ENCODE measurements at regions of chr5 and their contacts with region 1.

Region 1: GRCh38 chr5:172770675-172771438 is at the start of gene DUSP1:
- DNase-seq: peak; percentile 97
- H3K4me3 Mint-ChIP-seq: peak within 1 kb of the TSS; percentile 89
- H3K27ac Mint-ChIP-seq: peak within 1 kb of the TSS; percentile 92
- H3K4me1 Mint-ChIP-seq: peaks cover 65% of the 10 kb centered on the region
- H3K27me3 Mint-ChIP-seq: no peaks in the 10 kb centered on the region
- total RNA-seq, gene DUSP1: 10.6 to 10.7 TPM

Region 2: DNA sequence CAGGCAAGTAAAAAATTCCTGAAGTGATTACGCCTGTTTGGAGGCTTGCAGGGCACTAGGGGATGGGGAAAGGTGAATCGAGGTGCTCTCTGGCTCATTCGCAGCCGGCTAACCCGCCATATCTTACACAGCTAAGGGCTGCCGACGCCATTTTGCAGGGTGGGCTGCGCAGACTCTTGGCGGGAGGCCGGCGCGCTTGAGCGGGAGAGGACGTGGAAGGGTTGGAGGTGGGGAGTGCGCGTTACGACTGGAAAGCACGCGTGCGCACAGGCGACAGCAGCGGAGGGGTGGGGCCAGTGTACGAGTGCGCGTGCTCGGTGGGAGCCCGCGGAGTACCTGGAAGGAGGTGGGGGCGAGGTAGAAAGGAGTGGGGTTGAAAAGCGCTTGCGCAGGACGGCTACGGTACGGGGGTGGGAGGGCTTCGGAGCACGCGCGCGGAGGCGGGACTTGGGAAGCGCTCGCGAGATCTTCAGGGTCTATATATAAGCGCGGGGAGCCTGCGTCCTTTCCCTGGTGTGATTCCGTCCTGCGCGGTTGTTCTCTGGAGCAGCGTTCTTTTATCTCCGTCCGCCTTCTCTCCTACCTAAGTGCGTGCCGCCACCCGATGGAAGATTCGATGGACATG is 1383.4 kb before region 1 on chr5 and contains the start of gene NPM1:
- CTCF ChIA-PET with region 1: no interaction called
- POLR2A ChIA-PET with region 1: no interaction called
- intact Hi-C with region 1: loop called (anchors 5 kb)
- DNase-seq: peak; percentile 98
- H3K4me3 Mint-ChIP-seq: peak within 1 kb of the TSS; percentile 93
- H3K27ac Mint-ChIP-seq: peak within 1 kb of the TSS; percentile 96
- H3K4me1 Mint-ChIP-seq: peaks cover 39% of the 10 kb centered on the region
- H3K27me3 Mint-ChIP-seq: peaks cover 3% of the 10 kb centered on the region
- total RNA-seq, gene NPM1: 2,483 to 2,592 TPM

Region 3: GRCh38 chr5:171897231-171897630 is 873.6 kb before region 1 on chr5:
- CTCF ChIA-PET with region 1: no interaction called
- POLR2A ChIA-PET with region 1: no interaction called
- intact Hi-C with region 1: no loop called
- DNase-seq: peak; percentile 21
- H3K4me3 Mint-ChIP-seq: no peak overlapping the region
- H3K27ac Mint-ChIP-seq: no peak overlapping the region
- H3K4me1 Mint-ChIP-seq: peaks cover 20% of the 10 kb centered on the region
- H3K27me3 Mint-ChIP-seq: no peaks in the 10 kb centered on the region

Region 4: DNA sequence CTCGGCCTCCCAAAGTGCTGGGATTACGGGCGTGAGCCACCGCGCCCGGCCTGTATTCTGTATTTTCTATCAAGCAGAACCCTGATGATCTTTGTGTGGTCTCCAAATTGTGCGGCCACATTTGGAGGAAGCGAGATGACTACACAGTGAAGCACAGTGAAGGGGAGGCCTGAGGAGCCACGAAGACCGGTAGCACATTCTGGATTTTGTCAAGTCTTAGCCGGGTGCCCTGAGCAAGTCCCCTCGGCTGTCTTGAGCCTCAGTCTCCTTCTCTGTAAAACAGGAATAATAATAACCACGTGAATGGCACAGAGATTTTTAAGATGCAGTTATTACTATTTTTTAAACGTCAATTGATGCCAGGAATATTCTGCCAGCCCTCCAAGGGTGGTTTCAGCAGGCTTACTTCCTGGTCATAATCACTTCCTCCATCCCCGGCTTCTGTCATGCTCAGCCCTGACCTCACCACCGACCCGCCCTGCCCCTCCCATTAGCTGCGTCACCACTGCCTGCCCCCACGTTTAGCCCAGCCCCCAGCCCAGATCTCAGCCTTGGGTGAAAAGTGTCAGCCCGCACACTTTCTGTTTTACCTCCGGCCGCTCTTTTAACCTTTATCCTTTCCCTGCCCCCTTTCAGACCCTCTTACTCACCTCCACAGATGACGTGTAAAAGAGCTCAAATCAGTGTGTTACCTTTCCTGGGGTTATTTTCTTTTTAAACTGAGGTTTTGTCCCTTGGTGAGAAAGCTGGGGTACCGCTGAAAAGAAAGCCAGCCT is 36.2 kb after region 1 on chr5:
- CTCF ChIA-PET with region 1: interaction called, 12 read pairs
- POLR2A ChIA-PET with region 1: interaction called, 14 read pairs
- intact Hi-C with region 1: loop called (anchors 1 kb)
- DNase-seq: peak; percentile 98
- H3K4me3 Mint-ChIP-seq: peak overlapping the region; percentile 29
- H3K27ac Mint-ChIP-seq: peak overlapping the region; percentile 84
- H3K4me1 Mint-ChIP-seq: peaks cover 17% of the 10 kb centered on the region
- H3K27me3 Mint-ChIP-seq: no peaks in the 10 kb centered on the region

Region 5: DNA sequence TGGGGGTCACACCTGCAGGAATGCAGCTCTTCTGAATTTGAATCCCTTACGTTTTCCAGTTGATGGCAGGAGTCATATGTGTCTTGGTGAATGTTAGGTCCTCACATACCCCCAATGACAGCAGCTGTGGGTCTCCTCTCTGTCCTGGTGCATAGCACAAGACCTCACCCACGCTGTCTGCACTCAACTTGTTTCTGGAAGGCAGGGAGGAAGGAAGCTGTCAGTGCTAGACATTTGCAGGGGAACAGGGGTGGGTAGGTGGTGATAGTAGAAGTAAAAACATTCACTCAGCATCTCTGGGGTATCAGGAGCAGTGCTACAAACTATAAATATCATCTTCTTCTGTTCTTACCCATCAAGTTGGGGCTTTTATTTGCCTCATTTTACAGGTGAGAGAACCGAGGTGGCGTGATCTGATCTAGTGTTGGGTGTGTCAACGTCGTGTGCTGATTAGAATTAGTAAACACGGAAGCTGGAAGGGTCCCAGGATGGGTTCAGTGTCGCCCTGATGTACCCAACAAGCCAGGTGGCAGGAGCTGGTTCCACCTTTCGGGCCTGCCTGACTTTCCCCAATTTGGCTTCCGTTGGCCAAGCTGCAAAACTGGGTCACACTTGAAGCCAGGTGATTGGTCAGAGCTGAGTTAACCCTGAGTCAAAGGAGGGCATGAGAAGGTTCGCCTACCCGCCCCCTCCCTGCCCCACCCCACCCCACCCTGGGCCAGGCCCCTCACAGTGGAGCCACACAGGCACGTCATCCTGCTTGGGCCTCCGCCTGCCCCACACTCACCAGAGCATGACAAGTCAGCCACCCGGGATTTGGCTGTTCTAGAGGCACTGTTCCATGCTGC is 79.0 kb after region 1 on chr5:
- CTCF ChIA-PET with region 1: interaction called, 4 read pairs
- POLR2A ChIA-PET with region 1: interaction called, 4 read pairs
- intact Hi-C with region 1: loop called (anchors 5 kb)
- DNase-seq: no peak
- H3K4me3 Mint-ChIP-seq: no peak overlapping the region
- H3K27ac Mint-ChIP-seq: no peak overlapping the region
- H3K4me1 Mint-ChIP-seq: peaks cover 25% of the 10 kb centered on the region
- H3K27me3 Mint-ChIP-seq: no peaks in the 10 kb centered on the region

Region 6: DNA sequence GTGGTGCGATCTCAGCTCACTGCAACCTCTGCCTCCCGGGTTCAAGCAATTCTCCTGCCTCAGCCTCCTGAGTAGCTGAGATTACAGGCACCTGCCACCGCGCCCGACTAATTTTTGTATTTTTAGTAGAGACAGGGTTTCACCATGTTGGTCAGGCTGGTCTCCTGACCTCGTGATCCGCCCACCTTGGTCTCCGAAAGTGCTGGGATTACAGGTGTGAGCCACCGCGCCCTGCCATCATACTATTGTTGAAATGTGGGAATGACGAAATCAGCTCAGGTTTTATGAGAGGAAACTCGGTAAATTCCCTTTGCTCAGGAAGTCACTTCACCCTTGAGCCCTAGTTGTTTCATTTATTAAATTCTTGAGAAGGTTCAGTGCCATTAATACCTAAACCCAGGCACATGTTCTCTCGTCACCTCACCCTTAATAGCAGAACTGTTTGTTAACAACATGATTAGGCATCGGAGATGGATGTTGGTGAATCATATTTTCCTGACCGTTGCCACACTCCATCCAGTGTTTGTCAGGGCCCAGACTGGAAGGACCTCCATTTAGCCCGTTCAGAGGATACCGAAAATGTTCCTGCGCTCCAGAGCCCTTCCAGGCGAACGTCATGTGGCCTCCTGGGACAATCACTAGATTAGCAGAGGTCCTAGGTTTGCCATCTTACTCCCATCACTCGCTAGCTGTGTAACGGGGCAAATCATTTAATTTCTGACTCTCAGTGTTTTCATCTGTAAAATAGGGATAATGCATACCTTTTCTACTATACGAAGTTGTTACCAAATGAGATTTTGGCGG is 265.2 kb after region 1 on chr5:
- CTCF ChIA-PET with region 1: no interaction called
- POLR2A ChIA-PET with region 1: interaction called, 10 read pairs
- intact Hi-C with region 1: no loop called
- DNase-seq: peak; percentile 89
- H3K4me3 Mint-ChIP-seq: peak overlapping the region; percentile 78
- H3K27ac Mint-ChIP-seq: peak overlapping the region; percentile 98
- H3K4me1 Mint-ChIP-seq: peaks cover 64% of the 10 kb centered on the region
- H3K27me3 Mint-ChIP-seq: no peaks in the 10 kb centered on the region

Region 7: DNA sequence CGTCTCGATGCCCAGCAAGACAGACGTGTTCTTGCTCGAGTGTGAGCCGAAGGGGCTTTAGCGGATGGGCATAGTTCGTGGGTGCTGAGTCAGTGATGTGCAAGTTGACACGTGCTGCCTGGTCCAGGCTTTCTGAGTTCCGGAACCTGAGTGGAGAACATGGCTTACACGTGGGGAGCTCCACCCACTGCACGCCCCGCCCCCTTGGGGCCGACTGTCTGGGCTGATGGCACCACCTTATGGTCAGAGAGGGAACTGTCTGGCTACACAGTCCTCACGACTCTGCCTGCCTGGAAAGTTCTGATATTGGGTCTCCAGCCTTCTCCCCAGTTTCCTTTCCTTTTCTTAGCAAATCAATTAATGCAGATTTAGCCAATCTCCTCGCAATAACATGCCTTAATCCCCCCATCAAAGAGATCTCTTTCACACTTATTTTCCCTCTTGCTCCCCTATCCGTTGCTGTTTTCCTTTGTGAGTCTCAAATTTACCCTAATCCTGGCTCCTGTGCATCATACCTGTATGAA is 561.2 kb after region 1 on chr5:
- CTCF ChIA-PET with region 1: no interaction called
- POLR2A ChIA-PET with region 1: no interaction called
- intact Hi-C with region 1: loop called (anchors 10 kb)
- DNase-seq: peak; percentile 91
- H3K4me3 Mint-ChIP-seq: no peak overlapping the region
- H3K27ac Mint-ChIP-seq: no peak overlapping the region
- H3K4me1 Mint-ChIP-seq: peaks cover 22% of the 10 kb centered on the region
- H3K27me3 Mint-ChIP-seq: peaks cover 39% of the 10 kb centered on the region